Psoas muscle (tissue), 8 donors: ENCODE measurements at regions of chr13 and their contacts with region 1.

Region 1: GRCh38 chr13:26186118-26186870 is 35.8 kb downstream of the RNF6 start:
- DNase-seq: peak; percentile 89 to 93
- ATAC-seq: peak; percentile 94 to 97 (median 96)
- H3K4me3 ChIP-seq: peak overlapping the region; percentile 79
- H3K27ac ChIP-seq: peak overlapping the region; percentile 72
- H3K4me1 ChIP-seq: peaks cover 4% of the 10 kb centered on the region
- H3K27me3 ChIP-seq: no peaks in the 10 kb centered on the region
- CTCF ChIP-seq: peak; percentile 41

Region 2: GRCh38 chr13:25429466-25430249 is 756.6 kb before region 1 on chr13:
- intact Hi-C with region 1: no loop called
- DNase-seq: no peak
- ATAC-seq: no peak
- H3K4me3 ChIP-seq: no peak overlapping the region
- H3K27ac ChIP-seq: no peak overlapping the region
- H3K4me1 ChIP-seq: no peaks in the 10 kb centered on the region
- H3K27me3 ChIP-seq: no peaks in the 10 kb centered on the region
- CTCF ChIP-seq: no peak

Region 3: GRCh38 chr13:26155575-26155974 is 30.7 kb before region 1 on chr13:
- intact Hi-C with region 1: no loop called
- DNase-seq: no peak
- ATAC-seq: no peak
- H3K4me3 ChIP-seq: no peak overlapping the region
- H3K27ac ChIP-seq: no peak overlapping the region
- H3K4me1 ChIP-seq: no peaks in the 10 kb centered on the region
- H3K27me3 ChIP-seq: no peaks in the 10 kb centered on the region
- CTCF ChIP-seq: no peak

Region 4: DNA sequence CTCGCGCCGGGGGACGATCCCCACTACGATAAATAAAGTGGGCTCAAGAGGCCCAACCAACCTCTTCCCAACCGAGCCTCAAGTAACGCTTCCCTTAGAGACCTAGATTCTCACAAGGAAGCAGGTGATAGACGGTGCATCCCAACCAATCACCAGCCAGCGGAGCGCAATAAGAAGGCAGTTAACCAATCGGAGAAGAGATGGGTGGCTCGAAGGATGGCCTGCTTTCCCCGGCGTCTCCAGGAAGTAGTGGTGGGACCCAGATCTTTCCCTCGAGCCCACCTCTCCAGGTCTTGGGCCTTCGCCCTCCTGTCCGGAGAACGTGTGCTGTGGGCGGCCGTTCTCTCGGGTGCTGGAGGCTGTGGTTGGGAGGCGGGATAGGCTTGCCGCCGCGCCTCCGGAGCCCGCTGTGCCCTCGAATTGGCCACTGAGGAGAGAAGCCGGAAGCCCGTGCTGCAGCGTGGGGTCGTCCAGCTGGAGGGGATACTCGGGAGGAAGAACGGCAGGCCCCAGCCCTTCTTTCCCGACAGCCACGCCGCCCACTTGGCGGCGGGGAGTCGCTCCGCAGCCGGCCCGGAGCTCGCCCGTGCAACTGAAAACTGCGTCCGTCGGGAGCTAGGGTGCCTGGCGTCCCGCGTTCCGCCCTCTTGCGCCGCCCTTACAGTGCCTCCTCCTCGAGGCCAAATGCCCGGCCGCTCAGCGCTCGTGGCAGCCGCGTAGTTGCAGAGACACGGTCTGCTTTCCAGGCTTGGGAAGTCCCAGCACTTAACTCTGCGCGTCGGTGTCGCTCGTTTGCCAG is 35.6 kb after region 1 on chr13 and contains the start of gene RNF6:
- intact Hi-C with region 1: loop called in 1 of 2 experiments (anchors 5 kb)
- DNase-seq: peak; percentile 91 to 95
- ATAC-seq: peak; percentile 97 to 98 (median 98)
- H3K4me3 ChIP-seq: peak within 1 kb of the TSS; percentile 94
- H3K27ac ChIP-seq: peak within 1 kb of the TSS; percentile 99
- H3K4me1 ChIP-seq: peaks cover 27% of the 10 kb centered on the region
- H3K27me3 ChIP-seq: no peaks in the 10 kb centered on the region
- CTCF ChIP-seq: no peak
- total RNA-seq, gene RNF6: 45.1 to 50.8 (median 45.7) TPM

Region 5: DNA sequence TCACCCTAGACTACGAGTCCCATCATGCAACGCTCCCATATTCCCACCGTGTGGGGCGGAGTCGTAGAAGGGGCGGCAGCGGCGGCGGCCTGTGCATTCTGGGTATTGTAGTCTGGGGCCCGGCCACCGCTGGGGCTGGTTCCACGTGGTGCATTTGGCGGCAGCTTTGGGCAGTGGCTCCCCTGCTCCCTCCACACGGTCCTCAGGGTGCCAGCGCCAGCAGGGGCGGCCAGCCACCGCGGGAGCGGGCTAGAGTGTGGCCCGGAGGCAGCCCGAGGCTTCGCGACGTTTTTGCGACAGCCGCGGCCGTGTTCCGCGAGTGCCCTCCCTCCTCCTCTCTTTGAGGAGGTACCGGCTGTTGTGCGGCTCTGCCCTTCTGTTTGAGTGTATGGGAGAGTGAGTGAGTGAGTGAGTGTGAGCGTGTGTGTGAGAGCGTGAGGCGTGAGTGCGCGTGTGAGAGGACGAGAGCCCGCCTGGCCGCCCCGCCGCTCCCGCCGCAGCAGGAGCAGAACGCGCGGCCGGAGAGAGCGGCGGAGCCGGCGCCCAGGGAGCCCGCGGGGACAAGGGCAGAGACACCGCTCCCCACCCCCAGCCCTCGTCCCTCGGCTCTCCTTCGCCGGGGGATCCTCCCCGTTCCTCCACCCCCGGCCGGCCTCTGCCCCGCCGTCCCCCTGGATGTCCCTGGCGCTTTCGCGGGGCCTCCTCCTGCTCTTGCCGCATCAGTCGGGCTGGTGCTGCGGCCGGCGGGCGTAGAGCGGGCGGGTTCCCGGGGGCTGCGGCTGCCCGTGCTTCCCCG is 67.7 kb after region 1 on chr13 and contains the start of gene CDK8:
- intact Hi-C with region 1: loop called in 1 of 2 experiments (anchors 2 kb)
- DNase-seq: peak; percentile 94 to 97
- ATAC-seq: peak; percentile 91 to 94 (median 93)
- H3K4me3 ChIP-seq: peak within 1 kb of the TSS; percentile 96
- H3K27ac ChIP-seq: peak within 1 kb of the TSS; percentile 93
- H3K4me1 ChIP-seq: peaks cover 7% of the 10 kb centered on the region
- H3K27me3 ChIP-seq: no peaks in the 10 kb centered on the region
- CTCF ChIP-seq: no peak
- total RNA-seq, gene CDK8: 6.2 to 9.3 (median 8.6) TPM

Region 6: GRCh38 chr13:26497968-26498511 is 311.7 kb after region 1 on chr13:
- intact Hi-C with region 1: loop called (anchors 1 to 2 kb)
- DNase-seq: no peak
- ATAC-seq: no peak
- H3K4me3 ChIP-seq: no peak overlapping the region
- H3K27ac ChIP-seq: no peak overlapping the region
- H3K4me1 ChIP-seq: no peaks in the 10 kb centered on the region
- H3K27me3 ChIP-seq: no peaks in the 10 kb centered on the region
- CTCF ChIP-seq: no peak

Region 7: DNA sequence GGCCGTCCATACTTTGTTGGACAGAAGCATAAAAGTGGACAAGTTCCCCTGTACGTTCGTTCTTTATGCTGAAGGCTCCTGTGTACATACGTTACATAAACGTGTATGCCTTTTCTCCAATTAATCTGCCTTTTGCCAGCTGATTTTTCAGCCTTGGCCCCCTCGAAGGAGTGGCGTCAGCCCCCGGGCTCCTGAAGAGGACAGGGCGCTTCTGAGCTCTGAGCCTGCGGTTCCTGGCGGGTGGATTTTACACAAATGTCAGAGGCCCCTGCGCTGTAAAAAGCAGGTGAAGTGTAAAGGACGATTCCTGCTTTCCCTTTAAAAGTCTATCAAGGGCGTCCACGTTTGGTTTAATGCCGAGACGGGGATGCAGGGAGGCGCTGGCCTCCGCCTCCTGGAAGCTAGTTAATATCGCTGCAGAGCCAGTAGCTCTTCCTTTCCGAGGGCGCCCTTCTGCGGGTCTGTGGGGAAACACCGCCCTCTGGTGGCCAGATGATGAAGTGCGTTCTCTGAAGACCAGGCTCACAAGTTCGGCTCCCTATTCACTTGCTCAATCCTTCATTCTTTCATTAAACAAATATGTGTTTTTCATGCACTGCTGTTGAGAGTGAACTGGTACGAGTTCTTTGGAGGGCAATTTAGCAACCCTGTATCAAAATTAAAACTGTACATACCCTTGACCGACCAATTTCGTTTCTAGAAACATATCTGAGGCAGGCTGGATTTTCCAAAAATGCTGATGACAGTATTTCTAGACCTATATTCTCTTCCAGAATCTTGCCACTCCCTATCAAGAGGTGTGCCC is 512.3 kb after region 1 on chr13:
- intact Hi-C with region 1: loop called (anchors 2 to 5 kb)
- DNase-seq: peak; percentile 79 to 88
- ATAC-seq: peak; percentile 67 to 92 (median 86)
- H3K4me3 ChIP-seq: no peak overlapping the region
- H3K27ac ChIP-seq: no peak overlapping the region
- H3K4me1 ChIP-seq: no peaks in the 10 kb centered on the region
- H3K27me3 ChIP-seq: no peaks in the 10 kb centered on the region
- CTCF ChIP-seq: peak; percentile 98